SK-N-SH (cell line): ENCODE measurements at regions of chr12 and their contacts with region 1.

Region 1: DNA sequence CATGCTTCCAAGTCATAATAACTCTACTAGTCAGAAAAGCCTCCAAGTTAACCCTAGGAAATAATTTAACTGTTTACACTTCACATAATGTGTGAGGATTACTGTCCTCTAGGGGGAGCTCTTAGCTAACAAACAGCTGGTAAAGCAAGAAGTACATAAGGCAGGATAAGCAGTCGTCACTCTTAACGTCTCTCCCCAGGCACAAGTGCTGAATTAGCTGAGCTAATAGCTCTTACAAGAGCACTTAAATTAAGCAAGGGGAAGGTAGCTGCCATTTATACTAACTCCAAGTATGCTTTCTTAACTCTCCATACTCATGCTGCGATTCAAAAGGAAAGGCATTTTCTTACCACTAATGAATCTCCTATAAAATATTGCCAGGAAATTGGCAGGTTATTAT is 79.3 kb upstream of the TSPAN11 start:
- DNase-seq: peak; percentile 44
- H3K4me3 ChIP-seq: peak overlapping the region in 1 of 2 experiments; percentile 25; a peak in 1 of 4 replicates
- H3K27ac ChIP-seq: no peak overlapping the region
- H3K4me1 ChIP-seq: no peaks in the 10 kb centered on the region; a peak in 1 of 4 replicates
- H3K27me3 ChIP-seq: no peaks in the 10 kb centered on the region
- CTCF ChIP-seq: peak; percentile 90
- EP300 ChIP-seq: no peak
- RAD21 ChIP-seq: peak; percentile 89

Region 2: DNA sequence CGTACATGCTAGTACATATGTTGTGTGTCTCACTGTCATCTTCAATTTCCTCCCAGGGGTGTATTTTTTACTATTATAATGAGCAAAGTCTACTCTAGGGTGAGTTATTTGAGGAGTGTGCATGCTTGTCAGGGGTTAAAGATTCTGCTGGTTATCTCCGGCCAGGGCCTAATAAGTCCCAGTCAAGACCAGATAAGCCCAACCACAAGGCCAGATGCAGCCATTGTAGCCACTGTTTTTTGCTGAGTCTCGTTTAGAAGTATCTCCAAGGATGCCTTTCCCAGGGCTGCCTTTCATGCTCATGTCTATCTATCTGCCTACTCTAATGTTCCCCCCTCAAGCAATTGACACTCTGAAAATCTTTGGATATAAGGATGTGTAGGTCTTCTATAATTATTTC is 452.1 kb before region 1 on chr12:
- CTCF ChIA-PET with region 1: no interaction called
- POLR2A ChIA-PET with region 1: no interaction called
- DNase-seq: no peak
- H3K4me3 ChIP-seq: no peak overlapping the region
- H3K27ac ChIP-seq: no peak overlapping the region
- H3K4me1 ChIP-seq: no peaks in the 10 kb centered on the region
- H3K27me3 ChIP-seq: no peaks in the 10 kb centered on the region
- CTCF ChIP-seq: no peak
- EP300 ChIP-seq: no peak
- RAD21 ChIP-seq: no peak

Region 3: GRCh38 chr12:30754709-30755394 is 92.4 kb before region 1 on chr12 and contains the start of gene CAPRIN2:
- CTCF ChIA-PET with region 1: interaction called, 10 read pairs
- POLR2A ChIA-PET with region 1: no interaction called
- DNase-seq: peak; percentile 95
- H3K4me3 ChIP-seq: peak within 1 kb of the TSS; percentile 74 to 93
- H3K27ac ChIP-seq: peak within 1 kb of the TSS; percentile 49 to 94
- H3K4me1 ChIP-seq: peaks cover 3 to 14% of the 10 kb centered on the region in 2 experiments; a peak in 2 of 4 replicates
- H3K27me3 ChIP-seq: no peaks in the 10 kb centered on the region
- CTCF ChIP-seq: peak; percentile 41
- EP300 ChIP-seq: no peak
- RAD21 ChIP-seq: peak; percentile 47
- polyA plus RNA-seq, gene CAPRIN2: 21.4 and 29.1 TPM in 2 replicates

Region 4: DNA sequence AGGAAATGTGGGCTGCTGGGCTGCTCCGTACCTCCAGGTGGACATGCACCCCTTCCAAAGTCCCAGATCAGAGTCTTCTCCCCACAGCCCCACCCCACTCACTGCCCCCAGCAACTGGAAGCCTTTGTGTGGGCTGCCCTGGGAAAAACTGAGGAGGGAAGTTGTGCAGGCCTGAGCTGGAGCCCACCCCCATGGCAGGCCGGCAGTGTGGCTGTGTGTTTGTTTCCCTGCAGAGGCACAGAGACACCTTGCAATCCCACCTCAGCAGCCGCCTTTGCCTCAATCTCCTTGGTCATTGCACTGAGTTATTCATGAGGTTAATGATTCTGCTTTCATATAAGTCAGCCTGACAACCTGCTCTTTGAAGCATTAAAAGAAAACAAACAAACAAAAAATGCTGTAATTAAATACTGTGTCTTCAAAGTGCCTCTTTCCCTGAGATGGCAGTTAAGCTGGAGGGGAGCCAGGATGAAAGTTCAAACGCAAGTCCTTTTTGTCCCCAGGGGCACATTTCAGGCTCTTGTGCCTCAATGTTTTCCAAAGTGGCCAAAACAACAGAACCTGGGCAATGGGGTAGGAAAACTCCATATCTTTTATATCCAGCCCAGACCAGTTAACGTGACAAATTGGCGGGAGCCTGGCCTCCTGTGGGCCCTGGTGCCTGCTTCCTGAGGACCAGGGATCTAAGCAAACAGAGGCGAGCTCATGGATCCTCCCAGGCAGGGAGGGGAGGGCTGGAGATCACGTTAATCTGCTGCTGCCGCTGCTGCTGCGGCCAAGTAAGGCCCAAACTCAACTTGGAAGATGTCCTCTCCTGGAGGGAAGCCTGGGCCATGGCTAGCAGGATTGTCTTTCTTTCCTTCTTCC is 27.4 kb after region 1 on chr12:
- CTCF ChIA-PET with region 1: interaction called, 12 read pairs
- POLR2A ChIA-PET with region 1: no interaction called
- DNase-seq: peak; percentile 39
- H3K4me3 ChIP-seq: no peak overlapping the region
- H3K27ac ChIP-seq: no peak overlapping the region
- H3K4me1 ChIP-seq: peaks cover 0 to 8% of the 10 kb centered on the region in 2 experiments; a peak in 1 of 4 replicates
- H3K27me3 ChIP-seq: no peaks in the 10 kb centered on the region; the same call in 1 of the 2 replicates
- CTCF ChIP-seq: no peak
- EP300 ChIP-seq: no peak
- RAD21 ChIP-seq: no peak

Region 5: DNA sequence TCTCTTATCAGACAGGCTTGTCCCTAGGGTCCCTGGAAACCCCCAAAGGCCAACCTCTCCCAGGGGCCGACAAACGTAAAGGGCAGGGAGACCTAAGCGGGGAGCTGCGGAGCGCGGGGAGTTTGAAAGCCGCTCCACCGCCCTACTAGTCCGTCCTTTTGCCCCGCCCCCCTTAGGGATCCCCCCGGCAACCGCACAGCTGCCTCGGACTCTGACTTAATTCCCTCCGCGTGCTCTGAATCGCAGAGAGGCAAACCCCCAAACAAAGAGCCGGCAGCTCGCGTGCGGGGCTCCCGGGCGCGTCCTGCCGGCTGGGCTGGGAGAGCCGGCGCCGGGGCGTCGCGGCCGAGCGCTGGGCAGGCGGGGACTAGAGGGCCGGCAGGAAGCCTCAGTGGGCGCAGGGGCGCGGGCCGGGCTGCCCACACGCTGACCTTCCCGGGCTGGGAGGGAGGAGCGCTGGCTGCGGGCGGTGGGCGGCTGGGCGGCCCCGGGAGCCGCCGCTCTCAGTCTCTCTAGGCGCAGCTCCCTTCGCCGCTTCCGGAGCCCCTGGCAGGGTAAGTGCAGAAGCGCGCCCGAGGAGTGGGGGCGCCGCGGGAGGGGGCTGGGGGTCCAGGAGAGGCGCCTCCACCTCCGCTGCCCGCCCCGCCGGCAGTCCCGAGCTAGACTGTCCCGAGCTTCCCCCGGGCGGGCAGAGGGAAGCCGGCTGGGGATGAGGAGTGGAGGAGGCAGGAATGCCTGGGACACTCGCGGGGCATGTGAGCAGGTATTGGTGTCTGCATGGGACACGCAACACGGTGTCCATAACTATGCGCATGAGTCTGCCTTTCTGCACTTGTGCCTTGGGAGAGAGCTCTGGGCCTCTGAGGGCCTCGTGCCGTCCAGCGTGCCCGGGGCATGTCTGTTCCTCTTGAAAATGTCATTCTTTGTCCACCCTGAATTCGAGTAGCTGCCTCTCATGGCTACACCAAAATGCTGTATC is 79.3 kb after region 1 on chr12 and contains the start of gene TSPAN11:
- CTCF ChIA-PET with region 1: interaction called, 12 read pairs
- POLR2A ChIA-PET with region 1: no interaction called
- DNase-seq: peak; percentile 89
- H3K4me3 ChIP-seq: peak within 1 kb of the TSS; percentile 55 to 60
- H3K27ac ChIP-seq: peak within 1 kb of the TSS in 1 of 2 experiments; percentile 86; a peak in 2 of 4 replicates
- H3K4me1 ChIP-seq: peaks cover 9 to 53% of the 10 kb centered on the region in 2 experiments; a peak in 3 of 4 replicates
- H3K27me3 ChIP-seq: no peaks in the 10 kb centered on the region
- CTCF ChIP-seq: no peak
- EP300 ChIP-seq: no peak
- RAD21 ChIP-seq: no peak
- polyA plus RNA-seq, gene TSPAN11: 6.4 and 6.6 TPM in 2 replicates

Region 6: GRCh38 chr12:31238764-31239387 is 391.6 kb after region 1 on chr12:
- CTCF ChIA-PET with region 1: interaction called, 19 read pairs
- POLR2A ChIA-PET with region 1: no interaction called
- DNase-seq: peak; percentile 76
- H3K4me3 ChIP-seq: peak overlapping the region in 1 of 2 experiments; percentile 40; a peak in 2 of 4 replicates
- H3K27ac ChIP-seq: no peak overlapping the region
- H3K4me1 ChIP-seq: peaks cover 0 to 18% of the 10 kb centered on the region in 2 experiments; a peak in 2 of 4 replicates
- H3K27me3 ChIP-seq: no peaks in the 10 kb centered on the region; the same call in 1 of the 2 replicates
- CTCF ChIP-seq: peak; percentile 77
- EP300 ChIP-seq: no peak
- RAD21 ChIP-seq: peak; percentile 85